A549 (cell line): ENCODE measurements at regions of chr2 and their contacts with region 1.

Region 1: DNA sequence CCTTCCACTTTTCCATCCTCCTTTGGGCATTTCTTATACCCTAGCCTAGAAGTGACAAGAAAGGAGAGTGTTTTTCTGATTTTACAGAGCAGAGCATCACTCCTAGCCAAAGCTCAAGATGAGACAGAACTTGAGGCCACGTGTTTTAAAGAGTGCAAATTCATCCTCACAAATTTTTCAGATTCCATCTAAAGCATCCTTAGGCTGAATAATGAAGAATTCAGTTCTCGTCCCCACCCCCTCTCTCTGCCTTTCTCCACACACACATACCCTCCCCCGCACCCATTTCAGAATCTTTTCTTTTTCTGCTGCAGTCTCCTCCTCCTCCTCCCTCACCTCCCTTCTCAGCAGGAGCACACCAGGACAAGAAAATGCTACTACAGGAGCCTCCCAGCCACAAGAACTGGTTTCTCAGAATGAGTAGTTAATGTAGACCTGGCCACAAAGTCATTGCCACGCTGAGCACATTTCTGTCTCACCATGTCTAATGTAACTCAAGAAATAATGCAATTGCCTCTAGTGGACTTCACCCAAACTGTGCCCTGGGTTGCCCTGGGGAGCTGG is 82.8 kb upstream of the STPG4 start:
- DNase-seq: no peak
- ATAC-seq: no peak
- H3K4me3 ChIP-seq: no peak overlapping the region
- H3K27ac ChIP-seq: peak overlapping the region in 1 of 2 experiments; percentile 13; a peak in 1 of 6 replicates
- H3K4me1 ChIP-seq: peaks cover 14% of the 10 kb centered on the region
- CTCF ChIP-seq: no peak
- EP300 ChIP-seq: no peak
- POLR2A ChIP-seq: no peak
- RAD21 ChIP-seq: no peak

Region 2: DNA sequence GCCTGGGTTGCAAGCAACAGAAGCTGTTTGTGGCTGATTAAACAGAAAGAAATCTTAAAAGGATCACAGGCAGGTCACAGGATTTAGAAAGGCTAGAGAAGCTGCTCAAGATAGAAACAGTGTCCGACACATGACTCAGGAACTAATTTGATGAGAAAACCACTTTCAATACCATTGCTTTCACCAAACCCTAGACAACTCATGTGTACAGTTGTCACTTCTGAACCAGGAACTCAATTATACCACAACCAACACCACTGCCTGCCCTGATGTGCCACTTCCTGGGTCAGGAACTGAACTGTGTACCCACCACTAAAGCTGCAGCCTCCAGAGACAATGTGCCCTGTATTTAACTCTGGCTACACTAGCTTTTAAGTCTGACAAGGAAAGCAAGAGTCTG is 702.5 kb before region 1 on chr2:
- CTCF ChIA-PET with region 1: no interaction called
- POLR2A ChIA-PET with region 1: no interaction called
- DNase-seq: no peak
- ATAC-seq: no peak
- H3K4me3 ChIP-seq: no peak overlapping the region
- H3K27ac ChIP-seq: no peak overlapping the region
- H3K4me1 ChIP-seq: peaks cover 9% of the 10 kb centered on the region
- CTCF ChIP-seq: no peak
- EP300 ChIP-seq: no peak
- POLR2A ChIP-seq: no peak
- RAD21 ChIP-seq: no peak

Region 3: DNA sequence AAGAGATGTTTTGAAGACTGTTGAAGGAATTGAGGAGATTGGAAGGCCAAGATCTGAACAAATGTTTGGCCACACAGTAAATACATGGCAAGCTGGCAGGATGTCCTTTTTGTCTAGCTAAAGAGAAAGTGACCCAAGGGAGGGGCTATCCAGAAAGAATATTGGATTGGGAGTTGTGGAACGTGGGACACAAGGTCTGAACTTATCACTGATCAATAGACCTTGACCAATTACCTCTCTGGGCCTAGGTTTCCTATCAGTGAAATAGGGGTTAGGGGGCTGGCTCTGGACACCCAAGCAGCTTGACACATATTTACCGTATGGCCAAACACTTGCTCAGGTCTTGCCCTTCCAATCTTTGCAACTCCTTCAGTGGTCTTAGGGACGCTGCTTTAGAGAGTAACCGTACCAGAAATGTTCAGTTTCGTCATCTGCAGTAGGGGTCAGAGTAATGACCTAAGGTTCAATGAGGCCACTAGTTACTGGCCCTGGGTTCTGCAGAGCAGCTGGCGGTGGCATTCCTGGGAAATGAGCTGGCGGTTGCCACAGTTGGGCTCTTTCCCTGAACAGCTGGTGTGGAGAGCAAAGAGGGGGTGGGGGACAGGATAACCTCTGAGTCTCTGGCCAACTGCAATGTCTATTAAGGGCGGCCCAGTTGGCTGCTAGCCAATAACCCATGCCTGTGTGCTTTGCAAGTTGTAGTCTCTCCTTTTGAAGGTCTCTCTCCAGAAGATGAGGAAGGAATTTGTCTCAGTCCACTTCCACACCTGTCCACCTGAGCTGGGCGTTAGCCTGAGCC is 12.6 kb before region 1 on chr2:
- CTCF ChIA-PET with region 1: interaction called, 34 read pairs
- POLR2A ChIA-PET with region 1: no interaction called
- DNase-seq: peak in 1 of 2 experiments; percentile 51
- ATAC-seq: peak; percentile 70 to 72; a peak in 5 of 6 replicates
- H3K4me3 ChIP-seq: no peak overlapping the region
- H3K27ac ChIP-seq: peak overlapping the region; percentile 39 to 66; a peak in 5 of 6 replicates
- H3K4me1 ChIP-seq: peaks cover 26% of the 10 kb centered on the region
- CTCF ChIP-seq: no peak
- EP300 ChIP-seq: no peak; a peak in 1 of 5 replicates
- POLR2A ChIP-seq: no peak
- RAD21 ChIP-seq: 0 out of 5 replicates have a peak, but pooled peaks of 1 of the 2 experiments have one; percentile 8

Region 4: GRCh38 chr2:47422560-47422959 is 184.7 kb after region 1 on chr2:
- CTCF ChIA-PET with region 1: no interaction called
- POLR2A ChIA-PET with region 1: no interaction called
- DNase-seq: peak; percentile 23 to 29
- ATAC-seq: peak in 1 of 2 experiments; percentile 72; a peak in 3 of 6 replicates
- H3K4me3 ChIP-seq: no peak overlapping the region
- H3K27ac ChIP-seq: peak overlapping the region in 1 of 2 experiments; percentile 65; a peak in 3 of 6 replicates
- H3K4me1 ChIP-seq: peaks cover 11% of the 10 kb centered on the region; the same call in 2 of the 3 replicates
- CTCF ChIP-seq: no peak
- EP300 ChIP-seq: no peak
- POLR2A ChIP-seq: no peak
- RAD21 ChIP-seq: no peak